Endothelial cell of umbilical vein (primary cell): ENCODE measurements at regions of chr3 and their contacts with region 1.

Region 1: GRCh38 chr3:34929036-34929435 is 710.3 kb upstream of the ARPP21 start:
- DNase-seq: no peak
- H3K4me3 ChIP-seq: no peak overlapping the region
- H3K27ac ChIP-seq: no peak overlapping the region
- H3K4me1 ChIP-seq: no peaks in the 10 kb centered on the region
- H3K27me3 ChIP-seq: no peaks in the 10 kb centered on the region
- CTCF ChIP-seq: no peak
- POLR2A ChIP-seq: no peak

Region 2: DNA sequence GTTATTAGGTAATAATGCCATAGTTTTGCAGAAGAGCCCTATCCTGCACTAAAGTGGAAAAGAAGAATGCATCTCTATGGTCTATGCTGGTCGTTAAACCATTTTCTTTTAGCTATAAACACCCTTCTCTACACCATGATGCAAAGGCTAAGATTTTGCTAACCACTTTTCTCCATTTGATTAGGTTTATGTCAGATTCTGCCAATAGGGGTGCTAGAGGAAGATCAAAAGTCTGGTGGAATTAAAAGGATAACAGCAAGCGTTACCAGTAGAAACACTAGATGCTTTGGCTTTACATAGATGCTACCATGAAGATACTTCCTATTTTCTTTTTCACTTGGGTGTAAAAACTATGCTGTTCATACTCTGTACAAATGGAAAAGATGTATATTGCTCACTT is 40.5 kb after region 1 on chr3:
- CTCF ChIA-PET with region 1: no interaction called
- POLR2A ChIA-PET with region 1: no interaction called
- dilution Hi-C with region 1: no loop called
- intact Hi-C with region 1: loop called (anchors 1 kb)
- DNase-seq: no peak
- H3K4me3 ChIP-seq: no peak overlapping the region
- H3K27ac ChIP-seq: no peak overlapping the region
- H3K4me1 ChIP-seq: no peaks in the 10 kb centered on the region
- H3K27me3 ChIP-seq: no peaks in the 10 kb centered on the region
- CTCF ChIP-seq: no peak
- POLR2A ChIP-seq: no peak